IMR-90 (cell line): ENCODE measurements at regions of chr12 and their contacts with region 1.

Region 1: GRCh38 chr12:110165540-110166159 is 41.5 kb downstream of the IFT81 start:
- DNase-seq: no peak
- ATAC-seq: no peak
- H3K4me3 ChIP-seq: no peak overlapping the region
- H3K27ac ChIP-seq: no peak overlapping the region
- H3K4me1 ChIP-seq: peaks cover 2% of the 10 kb centered on the region; the same call in 1 of the 2 replicates
- H3K27me3 ChIP-seq: no peaks in the 10 kb centered on the region
- CTCF ChIP-seq: no peak
- POLR2A ChIP-seq: no peak
- RAD21 ChIP-seq: no peak

Region 2: DNA sequence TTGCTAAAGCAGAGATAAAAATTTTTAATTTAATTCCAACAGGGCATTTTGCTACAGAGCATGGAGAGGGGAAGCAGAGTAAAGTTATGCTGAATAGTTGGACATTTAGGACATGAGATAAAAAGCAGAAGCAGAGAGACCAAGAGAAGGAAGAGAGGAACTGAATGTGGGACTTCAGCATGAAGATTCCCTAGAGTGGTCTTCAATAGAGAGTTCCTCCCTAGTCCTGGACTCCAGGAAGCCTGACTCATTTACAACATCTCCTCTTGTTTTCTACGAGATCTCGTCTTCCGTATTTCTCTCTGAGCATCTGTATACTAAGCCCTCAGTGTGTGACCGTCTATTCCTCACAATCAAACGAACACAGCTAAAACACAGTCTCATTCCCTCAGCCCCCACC is 76.7 kb before region 1 on chr12:
- CTCF ChIA-PET with region 1: no interaction called
- POLR2A ChIA-PET with region 1: no interaction called
- dilution Hi-C with region 1: no loop called
- in situ Hi-C with region 1: no loop called
- intact Hi-C with region 1: no loop called
- DNase-seq: no peak
- ATAC-seq: no peak
- H3K4me3 ChIP-seq: no peak overlapping the region
- H3K27ac ChIP-seq: no peak overlapping the region
- H3K4me1 ChIP-seq: no peaks in the 10 kb centered on the region
- H3K27me3 ChIP-seq: peaks cover 31% of the 10 kb centered on the region
- CTCF ChIP-seq: no peak
- POLR2A ChIP-seq: no peak
- RAD21 ChIP-seq: no peak

Region 3: GRCh38 chr12:110149086-110149660 is 16.5 kb before region 1 on chr12:
- CTCF ChIA-PET with region 1: no interaction called
- POLR2A ChIA-PET with region 1: no interaction called
- dilution Hi-C with region 1: no loop called
- in situ Hi-C with region 1: no loop called
- intact Hi-C with region 1: loop called (anchors 2 kb)
- DNase-seq: no peak
- ATAC-seq: no peak
- H3K4me3 ChIP-seq: no peak overlapping the region
- H3K27ac ChIP-seq: no peak overlapping the region
- H3K4me1 ChIP-seq: no peaks in the 10 kb centered on the region
- H3K27me3 ChIP-seq: no peaks in the 10 kb centered on the region
- CTCF ChIP-seq: no peak
- POLR2A ChIP-seq: no peak
- RAD21 ChIP-seq: no peak